Sigmoid colon (tissue), 7 donors: ENCODE measurements at regions of chr3 and their contacts with region 1.

Region 1: GRCh38 chr3:61650276-61650675 is 88.9 kb downstream of the PTPRG start:
- DNase-seq: peak; percentile 93
- H3K4me3 ChIP-seq: no peak overlapping the region
- H3K27ac ChIP-seq: peak overlapping the region; percentile 23 to 86 (median 75)
- H3K4me1 ChIP-seq: peaks cover 0 to 39% (median 31%) of the 10 kb centered on the region in 4 donors
- H3K27me3 ChIP-seq: no peaks in the 10 kb centered on the region
- CTCF ChIP-seq: no peak
- EP300 ChIP-seq: no peak
- POLR2A ChIP-seq: no peak

Region 2: DNA sequence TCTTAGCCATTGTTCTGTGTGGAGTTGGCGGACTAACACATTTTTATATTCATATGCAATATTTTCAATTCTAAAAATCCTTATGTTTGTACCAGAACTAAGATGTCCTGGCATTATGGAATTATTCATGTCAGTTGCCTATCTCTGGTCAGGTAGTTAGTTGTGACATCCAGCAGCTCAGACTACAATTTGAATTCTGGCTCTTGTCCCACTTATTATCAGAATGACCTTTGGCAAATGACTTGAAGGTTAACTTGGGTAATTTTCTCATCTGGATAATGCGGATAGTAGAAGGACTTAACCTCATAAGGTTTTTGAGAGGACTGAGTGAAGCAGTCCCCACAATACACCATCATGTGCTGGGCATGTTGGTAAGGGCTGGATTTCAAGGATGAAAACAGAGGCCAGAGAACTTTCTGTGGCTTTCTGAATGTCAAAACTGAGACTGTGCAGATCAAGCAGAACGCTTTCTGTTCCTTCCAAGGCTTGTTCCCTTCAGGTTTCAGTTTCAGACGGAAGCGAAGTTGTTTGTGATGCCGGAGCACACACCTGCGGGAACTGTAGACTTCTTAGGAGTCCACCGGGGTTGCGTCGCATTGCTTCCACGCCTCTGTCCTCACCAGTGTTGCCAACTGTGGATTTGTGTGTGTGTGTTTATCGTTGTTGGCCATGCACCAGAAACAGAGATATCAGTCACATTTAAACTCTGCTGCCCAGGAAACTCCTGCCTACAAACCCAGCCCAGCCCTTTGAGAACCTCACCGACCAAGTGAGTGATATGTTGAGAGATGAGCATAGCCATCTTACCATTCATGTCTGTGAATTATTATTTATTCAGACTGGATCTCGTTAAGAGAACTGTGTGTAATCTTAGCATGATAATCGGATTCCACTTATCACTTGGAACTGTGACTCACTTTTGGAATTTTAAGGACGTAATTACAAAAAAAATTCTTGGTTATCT is 12.9 kb before region 1 on chr3:
- intact Hi-C with region 1: loop called (anchors 1 kb)
- DNase-seq: peak; percentile 75
- H3K4me3 ChIP-seq: peak overlapping the region; percentile 35 to 48 (median 46)
- H3K27ac ChIP-seq: peak overlapping the region; percentile 61 to 84 (median 82)
- H3K4me1 ChIP-seq: peaks cover 0 to 45% (median 23%) of the 10 kb centered on the region in 4 donors
- H3K27me3 ChIP-seq: no peaks in the 10 kb centered on the region
- CTCF ChIP-seq: no peak
- EP300 ChIP-seq: peak; percentile 12 to 74 (median 61)
- POLR2A ChIP-seq: no peak

Region 3: GRCh38 chr3:61718565-61718964 is 68.3 kb after region 1 on chr3:
- intact Hi-C with region 1: no loop called
- DNase-seq: no peak
- H3K4me3 ChIP-seq: no peak overlapping the region
- H3K27ac ChIP-seq: no peak overlapping the region
- H3K4me1 ChIP-seq: peaks cover 0 to 32% (median 8%) of the 10 kb centered on the region in 4 donors
- H3K27me3 ChIP-seq: no peaks in the 10 kb centered on the region
- CTCF ChIP-seq: no peak
- EP300 ChIP-seq: no peak
- POLR2A ChIP-seq: no peak

Region 4: GRCh38 chr3:61730042-61730441 is 79.8 kb after region 1 on chr3:
- intact Hi-C with region 1: no loop called
- DNase-seq: no peak
- H3K4me3 ChIP-seq: no peak overlapping the region
- H3K27ac ChIP-seq: no peak overlapping the region
- H3K4me1 ChIP-seq: peaks cover 0 to 43% (median 28%) of the 10 kb centered on the region in 4 donors
- H3K27me3 ChIP-seq: no peaks in the 10 kb centered on the region
- CTCF ChIP-seq: no peak
- EP300 ChIP-seq: no peak
- POLR2A ChIP-seq: no peak

Region 5: DNA sequence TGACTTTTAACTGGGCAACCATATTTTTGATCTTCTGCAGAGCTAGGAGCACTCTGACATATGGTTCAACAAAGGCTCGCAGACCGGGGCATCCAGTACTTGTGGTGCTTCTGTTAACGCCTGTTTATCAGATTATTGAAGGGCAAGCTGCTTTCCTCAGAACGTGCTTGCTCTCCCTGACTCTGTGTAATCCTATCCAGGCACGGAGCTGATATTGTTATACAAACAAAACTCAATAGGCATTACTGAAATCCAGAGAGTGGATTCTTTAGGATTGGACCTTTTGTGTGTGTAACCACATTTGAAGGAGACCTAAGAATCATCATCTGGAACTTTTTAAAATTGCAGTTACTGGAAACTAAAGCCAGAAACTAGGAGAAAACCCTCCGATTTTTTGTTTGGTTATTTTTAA is 157.6 kb after region 1 on chr3:
- intact Hi-C with region 1: loop called (anchors 5 kb)
- DNase-seq: no peak
- H3K4me3 ChIP-seq: no peak overlapping the region
- H3K27ac ChIP-seq: peak overlapping the region in 3 of 4 donors; percentile 67 to 80 (median 79)
- H3K4me1 ChIP-seq: peaks cover 0 to 100% (median 87%) of the 10 kb centered on the region in 4 donors
- H3K27me3 ChIP-seq: no peaks in the 10 kb centered on the region
- CTCF ChIP-seq: no peak
- EP300 ChIP-seq: peak in 1 of 4 donors; percentile 26
- POLR2A ChIP-seq: no peak